GM18951 (cell line): ENCODE measurements at regions of chr20 and their contacts with region 1.

Region 1: GRCh38 chr20:53413186-53413631 is 180.4 kb downstream of the ZNF217 start:
- POLR2A ChIP-seq: no peak

Region 2: DNA sequence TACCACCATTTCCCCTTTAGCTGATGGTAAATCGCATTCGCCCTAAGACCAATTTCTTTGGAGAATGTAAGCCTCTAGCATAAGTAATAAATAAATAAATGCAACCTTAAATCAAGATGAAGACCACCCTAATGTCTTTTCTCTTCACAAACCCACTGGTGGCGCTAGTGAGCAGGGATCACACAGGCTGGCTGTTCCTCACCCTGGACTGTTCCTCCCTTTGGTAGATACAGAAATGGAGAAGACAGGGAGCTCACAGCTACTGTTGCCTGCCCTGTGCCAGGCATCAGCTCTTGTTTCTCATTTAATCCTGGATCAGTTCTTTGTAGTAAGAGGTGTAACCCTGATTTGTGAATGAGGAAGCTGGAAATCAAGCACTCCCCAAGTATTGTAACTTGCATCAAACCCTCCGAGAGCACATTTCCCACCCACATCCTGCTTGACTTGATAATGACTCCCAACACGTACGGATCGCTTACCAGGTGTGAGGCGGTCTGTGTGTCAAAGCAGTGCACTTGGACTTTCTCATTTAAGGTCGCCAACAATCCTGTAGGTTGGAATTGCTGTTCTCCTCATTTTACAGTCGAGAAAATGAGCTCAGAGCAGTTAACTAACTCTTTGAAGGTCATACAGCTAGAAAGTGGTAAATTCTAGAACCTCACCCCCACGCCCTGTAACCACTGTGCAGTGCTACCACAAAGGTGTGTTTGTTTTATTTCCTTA is 204.9 kb before region 1 on chr20:
- in situ Hi-C with region 1: no loop called
- POLR2A ChIP-seq: no peak

Region 3: GRCh38 chr20:53322651-53323050 is 90.6 kb before region 1 on chr20:
- in situ Hi-C with region 1: no loop called
- POLR2A ChIP-seq: no peak

Region 4: DNA sequence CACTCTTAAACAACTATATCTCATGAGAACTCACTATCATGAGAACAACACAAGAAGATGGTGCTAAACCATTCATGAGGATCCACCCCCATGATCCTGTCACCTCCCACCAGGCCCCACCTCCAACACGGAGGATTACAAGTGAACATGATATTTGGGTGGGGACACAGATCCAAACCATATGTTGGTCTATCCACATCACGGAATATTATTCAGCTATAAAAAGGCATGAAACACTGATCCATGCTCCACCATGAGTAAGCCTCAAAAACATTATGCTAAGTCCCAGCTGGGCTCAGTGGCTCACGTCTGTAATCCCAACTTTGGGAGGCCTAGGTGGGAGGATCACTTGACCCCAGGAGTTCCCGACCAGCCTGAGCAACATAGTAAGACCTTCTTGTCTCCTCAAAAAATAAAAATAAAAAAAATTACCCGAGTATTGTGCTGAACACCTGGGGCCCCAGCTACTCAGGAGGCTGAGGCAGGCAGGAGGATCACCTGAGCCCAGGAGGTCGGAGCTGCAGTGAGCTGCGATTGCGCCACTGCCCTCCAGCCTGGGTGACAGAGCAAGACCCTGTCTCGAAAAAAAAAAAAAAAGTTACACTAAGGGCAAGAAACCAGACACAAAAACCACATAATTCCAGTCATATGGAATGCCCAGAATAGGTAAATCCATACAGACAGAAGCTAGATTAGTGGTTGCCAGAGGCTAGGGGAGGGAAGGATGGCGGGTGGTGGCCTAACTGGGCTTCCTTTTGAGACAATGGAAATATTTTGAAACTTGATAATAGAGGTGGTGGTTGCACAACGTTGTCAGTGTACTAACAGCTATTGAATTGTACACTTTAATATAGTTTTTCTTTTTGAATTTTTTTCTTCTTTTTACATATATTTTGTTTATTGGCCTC is 137.3 kb after region 1 on chr20:
- in situ Hi-C with region 1: loop called (anchors 10 kb)
- POLR2A ChIP-seq: no peak